Common myeloid progenitor, CD34-positive (primary cell): ENCODE measurements at regions of chr5 and their contacts with region 1.

Region 1: DNA sequence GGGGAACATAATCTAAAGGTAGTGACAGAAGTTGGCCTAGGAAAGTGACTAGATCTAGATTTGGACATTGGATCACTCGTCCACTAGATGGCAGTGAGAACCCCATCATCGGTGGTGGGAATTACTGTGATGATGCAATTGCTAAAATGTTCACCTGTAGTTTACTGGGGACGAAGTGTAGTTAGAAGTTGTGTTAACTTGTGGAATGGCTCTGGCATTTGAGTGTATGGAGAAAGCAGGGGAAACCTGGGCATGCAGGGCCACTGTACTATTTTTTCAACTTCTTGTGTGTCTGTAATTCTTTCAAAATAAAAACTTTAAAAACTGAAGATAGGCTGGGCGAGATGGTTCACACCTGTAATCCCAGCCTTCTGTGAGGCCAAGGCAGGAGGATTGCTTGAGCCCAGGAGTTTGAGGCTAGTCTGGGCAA is 75.5 kb downstream of the PHAX start:
- DNase-seq: peak; percentile 71 to 82 (median 77)
- H3K4me3 ChIP-seq: no peak overlapping the region
- H3K27ac ChIP-seq: no peak overlapping the region
- H3K4me1 ChIP-seq: peaks cover 0 to 15% (median 2%) of the 10 kb centered on the region in 4 experiments
- H3K27me3 ChIP-seq: no peaks in the 10 kb centered on the region

Region 2: GRCh38 chr5:126686451-126687126 is 10.4 kb after region 1 on chr5:
- CTCF ChIA-PET with region 1: interaction called, 12 read pairs
- POLR2A ChIA-PET with region 1: no interaction called
- DNase-seq: peak; percentile 22 to 52 (median 33)
- H3K4me3 ChIP-seq: no peak overlapping the region
- H3K27ac ChIP-seq: no peak overlapping the region
- H3K4me1 ChIP-seq: peaks cover 2 to 12% (median 7%) of the 10 kb centered on the region in 4 experiments
- H3K27me3 ChIP-seq: no peaks in the 10 kb centered on the region

Region 3: GRCh38 chr5:126776497-126777256 is 100.5 kb after region 1 on chr5 and contains the start of gene LMNB1:
- CTCF ChIA-PET with region 1: interaction called, 271 read pairs
- POLR2A ChIA-PET with region 1: interaction called, 3 read pairs
- DNase-seq: peak; percentile 92 to 97 (median 96)
- H3K4me3 ChIP-seq: peak within 1 kb of the TSS; percentile 66 to 98 (median 95)
- H3K27ac ChIP-seq: peak within 1 kb of the TSS; percentile 46 to 86
- H3K4me1 ChIP-seq: peaks cover 11 to 39% (median 19%) of the 10 kb centered on the region in 4 experiments
- H3K27me3 ChIP-seq: no peaks in the 10 kb centered on the region

Region 4: DNA sequence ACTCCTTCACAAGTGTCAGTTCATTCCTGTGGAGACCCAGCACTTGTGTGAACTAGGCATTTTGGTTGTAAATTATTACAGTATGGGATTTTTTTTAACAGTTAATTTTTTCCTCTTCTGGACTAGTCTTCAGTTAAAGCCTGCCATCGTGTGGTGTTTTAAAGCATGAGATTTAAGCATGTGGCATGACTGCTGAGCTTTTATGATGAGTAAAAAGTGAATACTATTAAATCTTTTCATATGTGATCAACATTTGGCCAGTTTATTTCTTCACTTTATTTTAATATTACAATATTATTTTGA is 125.7 kb after region 1 on chr5:
- CTCF ChIA-PET with region 1: interaction called, 112 read pairs
- POLR2A ChIA-PET with region 1: no interaction called
- DNase-seq: peak; percentile 69 to 84 (median 80)
- H3K4me3 ChIP-seq: no peak overlapping the region
- H3K27ac ChIP-seq: no peak overlapping the region
- H3K4me1 ChIP-seq: peaks cover under 1 to 29% (median 17%) of the 10 kb centered on the region in 4 experiments
- H3K27me3 ChIP-seq: no peaks in the 10 kb centered on the region

Region 5: GRCh38 chr5:126808521-126808988 is 132.3 kb after region 1 on chr5:
- CTCF ChIA-PET with region 1: interaction called, 112 read pairs
- POLR2A ChIA-PET with region 1: no interaction called
- DNase-seq: peak; percentile 54 to 74 (median 63)
- H3K4me3 ChIP-seq: peak overlapping the region in 4 of 7 experiments; percentile 17 to 45 (median 30)
- H3K27ac ChIP-seq: no peak overlapping the region
- H3K4me1 ChIP-seq: peaks cover 8 to 63% (median 33%) of the 10 kb centered on the region in 4 experiments
- H3K27me3 ChIP-seq: no peaks in the 10 kb centered on the region